Activated CD4-positive, alpha-beta T cell treated with anti-CD3 and anti-CD28 coated beads, Interleukin-2, amount 10 ng/mL, durations not matched to agents 24 days and 14 days (primary cell): ENCODE measurements at regions of chr6 and their contacts with region 1.

Region 1: GRCh38 chr6:68967549-68968300 is 332.6 kb downstream of the ADGRB3 start:
- DNase-seq: peak; percentile 89
- H3K4me3 Mint-ChIP-seq: no peak overlapping the region
- H3K27ac Mint-ChIP-seq: no peak overlapping the region
- H3K4me1 Mint-ChIP-seq: peaks cover 6% of the 10 kb centered on the region
- H3K27me3 Mint-ChIP-seq: no peaks in the 10 kb centered on the region

Region 2: DNA sequence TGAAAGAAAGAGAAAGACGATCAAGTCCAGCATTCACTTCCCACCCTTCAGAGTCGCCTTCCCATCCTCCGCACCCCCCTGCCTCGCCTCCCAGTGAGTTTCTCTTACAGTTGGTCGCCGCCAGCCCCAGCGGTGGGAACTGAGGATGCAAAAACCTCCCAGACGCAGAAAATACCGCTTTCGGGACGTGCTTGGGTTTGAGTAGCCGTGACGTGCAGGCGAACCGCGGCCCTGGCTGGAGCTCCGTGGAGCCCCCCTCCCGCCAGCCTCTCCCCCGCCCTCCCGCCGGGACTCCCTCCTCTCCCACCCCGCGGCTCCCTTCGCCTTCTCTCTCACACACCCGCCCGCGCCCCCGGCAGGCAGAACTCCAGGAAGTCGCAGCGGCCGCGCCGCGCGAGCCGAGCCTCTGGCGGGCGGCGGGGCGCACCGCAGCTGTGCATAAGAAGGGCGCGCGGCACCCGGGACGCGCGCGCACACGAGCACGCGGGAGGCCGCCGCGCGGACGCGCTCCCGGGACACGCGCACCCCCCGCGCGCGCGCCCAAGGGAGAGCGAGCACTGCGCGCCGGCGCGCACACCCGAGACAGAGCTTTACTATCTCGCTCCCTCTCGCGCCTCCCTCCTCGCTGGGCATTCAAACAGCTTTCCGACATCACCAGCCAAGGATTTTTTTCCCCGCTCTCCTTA is 332.9 kb before region 1 on chr6 and contains the start of gene ADGRB3:
- intact Hi-C with region 1: loop called (anchors 5 kb)
- DNase-seq: peak; percentile 79
- H3K4me3 Mint-ChIP-seq: peak within 1 kb of the TSS; percentile 85
- H3K27ac Mint-ChIP-seq: no peak within 1 kb of the TSS
- H3K4me1 Mint-ChIP-seq: peaks cover 14% of the 10 kb centered on the region
- H3K27me3 Mint-ChIP-seq: peaks cover 48% of the 10 kb centered on the region
- total RNA-seq, gene ADGRB3: not detected in 2 replicates

Region 3: DNA sequence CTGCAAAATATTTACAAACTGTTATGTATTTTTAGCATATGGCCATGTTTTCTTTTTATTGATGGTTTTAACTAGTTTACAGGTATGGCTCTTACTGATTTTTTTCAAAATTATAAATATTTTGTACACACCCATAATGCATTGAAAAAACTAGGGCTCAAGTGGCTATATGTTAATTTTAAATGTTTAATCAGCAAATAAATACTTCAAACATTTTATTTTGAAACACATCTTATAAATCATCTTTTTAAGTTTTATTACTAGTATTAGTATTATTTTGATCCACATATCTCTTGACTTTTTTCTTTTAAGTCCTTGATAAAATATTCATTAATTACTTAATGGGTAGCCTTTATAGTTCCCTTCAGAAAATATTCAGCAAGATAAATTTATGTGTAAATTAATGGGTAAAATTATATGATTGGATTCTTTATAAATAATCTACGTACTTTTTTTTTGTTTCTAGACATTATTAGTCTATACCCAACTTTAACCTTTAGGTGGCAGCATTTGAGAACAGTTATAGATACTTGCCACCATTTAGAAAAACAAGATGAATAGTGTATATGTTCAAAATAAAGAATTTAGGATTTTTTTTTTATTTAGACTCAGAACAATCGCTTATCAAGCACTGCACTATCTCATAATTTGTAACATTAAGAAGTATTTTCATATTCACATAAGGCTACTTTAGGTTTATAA is 90.8 kb before region 1 on chr6:
- intact Hi-C with region 1: loop called (anchors 2 kb)
- DNase-seq: no peak
- H3K4me3 Mint-ChIP-seq: no peak overlapping the region
- H3K27ac Mint-ChIP-seq: no peak overlapping the region
- H3K4me1 Mint-ChIP-seq: no peaks in the 10 kb centered on the region
- H3K27me3 Mint-ChIP-seq: no peaks in the 10 kb centered on the region

Region 4: GRCh38 chr6:68990317-68990716 is 22.6 kb after region 1 on chr6:
- intact Hi-C with region 1: no loop called
- DNase-seq: no peak
- H3K4me3 Mint-ChIP-seq: no peak overlapping the region
- H3K27ac Mint-ChIP-seq: no peak overlapping the region
- H3K4me1 Mint-ChIP-seq: no peaks in the 10 kb centered on the region
- H3K27me3 Mint-ChIP-seq: no peaks in the 10 kb centered on the region